Activated T-helper 1 cell treated with anti-CD3 and anti-CD28 coated beads, Interleukin-12 subunit alpha, Interleukin-12 subunit beta, Interleukin-2, Interleukin-4 antibody, amounts not matched to agents 30 ng/mL and 10 ng/mL and 1 ng/mL, durations not matched to agents 14 hours and 24 hours and 36 hours (primary cell): ENCODE measurements at regions of chr6 and their contacts with region 1.

Region 1: DNA sequence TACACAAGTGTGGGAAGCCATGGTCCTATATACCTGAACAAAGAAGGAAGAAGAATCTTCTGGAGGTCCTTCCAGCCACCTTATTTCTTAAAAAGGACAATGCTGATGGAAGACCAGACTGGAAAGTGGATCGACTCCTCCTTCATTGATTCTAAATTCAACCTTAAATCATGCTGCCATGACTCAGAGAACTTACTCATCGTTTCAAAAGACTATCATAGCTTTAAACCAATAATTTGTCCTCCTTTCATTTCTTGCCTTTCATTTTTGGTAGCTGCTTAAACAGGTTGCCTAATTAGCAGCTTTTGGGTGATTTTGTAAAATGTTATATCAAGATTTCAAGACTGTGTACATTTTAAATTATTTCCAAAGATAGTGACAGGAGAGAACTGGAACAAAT is 60.8 kb downstream of the RTN4IP1 start:
- DNase-seq: no peak
- H3K4me3 Mint-ChIP-seq: no peak overlapping the region
- H3K27ac Mint-ChIP-seq: no peak overlapping the region
- H3K4me1 Mint-ChIP-seq: no peaks in the 10 kb centered on the region
- H3K27me3 Mint-ChIP-seq: no peaks in the 10 kb centered on the region

Region 2: DNA sequence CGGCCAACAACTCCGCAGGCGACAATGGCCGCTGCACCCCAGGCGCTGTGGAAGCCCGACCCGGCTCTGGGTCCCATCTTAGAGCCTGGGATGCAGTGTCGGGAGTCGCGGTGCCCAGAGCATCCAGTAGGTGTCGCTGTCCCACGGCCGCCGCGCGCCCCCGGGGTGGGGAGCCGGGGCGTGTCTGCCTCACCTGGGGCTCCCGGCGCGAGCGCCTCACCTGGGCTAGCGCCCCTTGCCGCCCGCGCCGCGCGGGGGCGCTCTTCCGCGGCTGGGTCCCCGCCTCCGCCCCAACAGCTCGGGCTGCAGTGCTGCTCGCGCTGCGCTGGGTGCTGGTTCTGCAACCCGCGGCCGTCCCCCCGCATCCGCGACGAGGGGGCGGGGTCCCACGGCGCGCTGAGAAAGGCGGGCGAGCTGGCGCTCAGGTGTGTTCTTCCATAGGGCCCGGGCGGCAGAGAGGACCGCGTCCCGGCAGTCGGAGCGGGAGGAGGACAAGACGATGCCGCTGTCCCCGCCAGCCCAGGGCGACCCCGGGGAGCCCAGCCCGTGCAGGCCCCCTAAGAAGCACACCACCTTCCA is 208.0 kb before region 1 on chr6 and contains the start of gene CRYBG1:
- intact Hi-C with region 1: loop called (anchors 5 kb)
- DNase-seq: peak; percentile 52
- H3K4me3 Mint-ChIP-seq: peak within 1 kb of the TSS; percentile 81
- H3K27ac Mint-ChIP-seq: no peak within 1 kb of the TSS
- H3K4me1 Mint-ChIP-seq: peaks cover 10% of the 10 kb centered on the region
- H3K27me3 Mint-ChIP-seq: peaks cover 61% of the 10 kb centered on the region
- total RNA-seq, gene CRYBG1: 10.2 and 11.4 TPM in 2 replicates